ENCODE measurements at regions of chr3 and their contacts with region 1.

Region 1: DNA sequence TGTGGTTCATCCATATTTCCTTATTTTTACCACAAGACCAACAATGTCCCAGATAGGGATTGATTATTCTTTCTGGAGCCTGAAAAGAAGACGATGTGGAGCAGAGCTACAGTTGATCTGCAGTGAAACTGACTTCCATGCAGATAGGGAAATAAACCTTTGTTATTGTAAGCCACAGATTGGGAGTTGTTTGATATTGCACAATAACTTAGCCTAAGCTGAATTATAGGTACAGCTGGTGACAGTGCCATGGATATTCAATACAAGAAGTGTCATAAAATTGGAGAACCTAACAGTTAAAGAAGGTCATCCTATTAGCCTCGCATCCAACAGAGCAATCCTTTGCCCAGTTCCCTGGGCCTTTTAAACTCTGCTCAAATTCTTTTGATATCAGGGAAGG is 367.7 kb upstream of the PPP2R3A start:
- DNase-seq: no peak
- H3K4me3 ChIP-seq: no peak overlapping the region
- H3K27ac ChIP-seq: no peak overlapping the region
- H3K4me1 ChIP-seq: no peaks in the 10 kb centered on the region
- H3K27me3 ChIP-seq: no peaks in the 10 kb centered on the region
- CTCF ChIP-seq: no peak
- EP300 ChIP-seq: no peak
- POLR2A ChIP-seq: no peak

Region 2: GRCh38 chr3:134419214-134419959 is 1178.5 kb before region 1 on chr3:
- intact Hi-C with region 1: no loop called
- DNase-seq: no peak
- H3K4me3 ChIP-seq: no peak overlapping the region
- H3K27ac ChIP-seq: no peak overlapping the region
- H3K4me1 ChIP-seq: no peaks in the 10 kb centered on the region
- H3K27me3 ChIP-seq: no peaks in the 10 kb centered on the region
- CTCF ChIP-seq: no peak
- EP300 ChIP-seq: no peak
- POLR2A ChIP-seq: no peak

Region 3: DNA sequence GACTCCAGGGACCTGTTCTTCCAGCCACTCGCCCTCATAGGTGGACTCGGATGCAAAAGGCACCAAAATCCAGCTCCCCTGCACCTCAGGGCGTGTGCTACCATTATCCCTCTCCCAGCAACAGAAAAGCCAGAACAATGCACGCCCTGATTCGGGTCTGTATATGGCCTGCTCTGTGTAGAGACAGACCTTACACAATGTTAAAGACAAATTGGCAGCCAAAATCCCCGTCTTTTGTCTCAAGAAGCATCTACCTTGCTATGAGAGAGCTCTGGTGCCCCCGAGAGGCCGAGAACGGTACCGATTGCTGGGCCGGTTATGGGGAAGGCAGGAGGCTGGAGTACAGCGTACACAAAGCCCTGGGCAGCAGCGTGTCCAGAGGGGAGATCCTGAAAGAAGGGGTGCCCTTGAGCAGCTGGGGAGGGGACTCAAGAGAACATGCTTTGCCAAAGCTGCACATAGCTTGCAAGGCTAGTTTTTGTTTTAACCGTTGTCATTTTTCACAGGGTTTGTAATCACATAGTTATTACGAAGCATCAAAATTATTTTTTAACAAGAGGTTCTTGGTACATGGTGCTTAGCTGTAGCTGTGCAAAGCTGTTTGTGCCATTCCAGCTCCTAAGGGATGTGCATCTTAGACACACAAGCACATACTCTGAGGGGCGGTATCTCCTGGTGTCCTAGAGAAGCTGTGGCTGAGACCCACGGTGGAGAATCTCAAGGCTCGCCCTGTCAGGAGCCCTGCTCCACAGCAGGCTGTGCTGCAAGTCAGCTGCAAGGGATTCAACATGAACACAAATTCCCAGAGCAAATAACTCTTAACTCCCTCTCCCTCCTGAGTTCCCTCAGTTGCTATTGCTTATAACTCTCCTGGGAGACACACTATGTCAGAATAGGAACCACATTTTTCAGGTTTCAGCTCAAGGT is 93.8 kb before region 1 on chr3:
- intact Hi-C with region 1: no loop called
- DNase-seq: peak in 2 of 5 donors; percentile 29 to 42
- H3K4me3 ChIP-seq: no peak overlapping the region
- H3K27ac ChIP-seq: no peak overlapping the region
- H3K4me1 ChIP-seq: peaks cover 3% of the 10 kb centered on the region
- H3K27me3 ChIP-seq: no peaks in the 10 kb centered on the region
- CTCF ChIP-seq: no peak
- EP300 ChIP-seq: no peak
- POLR2A ChIP-seq: no peak

Region 4: GRCh38 chr3:135694142-135694541 is 96.3 kb after region 1 on chr3:
- intact Hi-C with region 1: no loop called
- DNase-seq: no peak
- H3K4me3 ChIP-seq: no peak overlapping the region
- H3K27ac ChIP-seq: no peak overlapping the region
- H3K4me1 ChIP-seq: no peaks in the 10 kb centered on the region
- H3K27me3 ChIP-seq: no peaks in the 10 kb centered on the region
- CTCF ChIP-seq: no peak
- EP300 ChIP-seq: no peak
- POLR2A ChIP-seq: no peak

Region 5: GRCh38 chr3:135851201-135852081 is 253.6 kb after region 1 on chr3:
- intact Hi-C with region 1: loop called in 1 of 4 experiments (anchors 5 kb)
- DNase-seq: no peak
- H3K4me3 ChIP-seq: no peak overlapping the region
- H3K27ac ChIP-seq: no peak overlapping the region
- H3K4me1 ChIP-seq: no peaks in the 10 kb centered on the region
- H3K27me3 ChIP-seq: no peaks in the 10 kb centered on the region
- CTCF ChIP-seq: no peak
- EP300 ChIP-seq: no peak
- POLR2A ChIP-seq: no peak